ENCODE measurements at regions of chr21 and their contacts with region 1.

Region 1: GRCh38 chr21:18917622-18918021 is 514.0 kb upstream of the TMPRSS15 start:
- DNase-seq: no peak
- H3K4me3 ChIP-seq: no peak overlapping the region
- H3K27ac ChIP-seq: no peak overlapping the region
- H3K4me1 ChIP-seq: no peaks in the 10 kb centered on the region
- H3K27me3 ChIP-seq: no peaks in the 10 kb centered on the region
- CTCF ChIP-seq: no peak
- POLR2A ChIP-seq: no peak

Region 2: GRCh38 chr21:18741954-18742353 is 175.7 kb before region 1 on chr21:
- intact Hi-C with region 1: no loop called
- DNase-seq: no peak
- H3K4me3 ChIP-seq: no peak overlapping the region
- H3K27ac ChIP-seq: no peak overlapping the region
- H3K4me1 ChIP-seq: no peaks in the 10 kb centered on the region
- H3K27me3 ChIP-seq: no peaks in the 10 kb centered on the region
- CTCF ChIP-seq: no peak
- POLR2A ChIP-seq: no peak

Region 3: DNA sequence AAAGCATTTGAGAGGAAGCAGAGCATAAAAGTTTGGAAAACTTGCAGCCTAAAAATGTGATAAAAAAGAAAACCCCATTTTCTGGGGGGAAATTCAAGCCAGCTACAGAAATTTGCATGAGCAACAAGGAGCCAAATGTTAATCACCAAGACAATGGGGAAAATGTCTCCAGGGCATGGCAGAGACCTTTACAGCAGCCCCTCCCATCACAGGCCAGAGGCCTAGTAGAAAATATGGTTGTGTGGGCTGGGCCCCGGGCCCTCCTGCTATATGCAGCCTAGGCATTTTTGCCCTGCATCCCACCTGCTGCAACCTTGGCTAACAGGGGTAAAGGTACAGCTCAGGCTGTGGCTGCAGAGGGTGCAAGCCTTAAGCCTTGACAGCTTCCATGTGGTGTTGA is 1781.0 kb after region 1 on chr21:
- intact Hi-C with region 1: loop called (anchors 5 kb)
- DNase-seq: no peak
- H3K4me3 ChIP-seq: no peak overlapping the region
- H3K27ac ChIP-seq: no peak overlapping the region
- H3K4me1 ChIP-seq: no peaks in the 10 kb centered on the region
- H3K27me3 ChIP-seq: no peaks in the 10 kb centered on the region
- CTCF ChIP-seq: no peak
- POLR2A ChIP-seq: no peak